ENCODE measurements at regions of chr10 and their contacts with region 1.

Region 1: DNA sequence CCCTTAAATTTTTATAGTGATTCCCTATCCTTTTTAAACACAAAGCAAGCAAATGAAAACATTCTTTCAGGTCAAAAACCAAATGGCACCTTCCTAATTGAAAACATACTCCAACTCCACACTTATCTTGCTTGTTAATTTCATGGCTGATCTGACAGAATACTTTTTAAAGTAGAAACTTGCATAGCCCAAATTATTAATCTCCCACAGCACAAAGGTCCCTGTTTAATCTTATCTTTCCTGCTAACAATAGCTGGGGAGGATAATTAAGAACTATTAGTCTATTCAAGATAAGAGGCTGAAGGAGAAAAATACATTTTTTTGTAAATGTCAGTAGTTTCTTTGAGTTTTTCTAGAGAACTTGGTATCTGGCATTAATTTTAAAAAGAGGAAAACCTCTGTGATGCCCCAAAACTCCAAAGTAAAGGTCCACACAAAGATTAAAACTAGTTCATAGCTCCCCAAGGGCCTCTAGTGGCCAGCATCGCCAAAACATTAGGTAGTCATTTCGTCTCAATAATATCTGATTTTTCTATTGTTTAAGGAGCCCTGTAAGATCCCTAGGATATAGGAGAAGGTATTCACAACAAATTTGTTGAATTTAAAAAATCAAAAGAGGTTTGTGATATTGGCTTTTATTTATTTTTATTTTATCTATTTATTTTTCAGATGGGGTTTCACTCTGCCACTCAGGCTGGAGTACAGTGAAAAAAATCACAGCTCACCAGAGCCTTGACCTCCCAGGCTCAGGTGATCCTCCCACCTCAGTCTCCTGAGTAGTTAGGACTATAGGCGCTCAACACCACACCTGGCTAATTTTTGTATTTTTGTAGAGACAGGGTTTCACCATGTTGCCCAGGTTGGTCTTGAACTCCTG is 14.7 kb downstream of the CDNF start:
- DNase-seq: no peak
- H3K4me3 ChIP-seq: no peak overlapping the region
- H3K27ac ChIP-seq: no peak overlapping the region
- H3K4me1 ChIP-seq: no peaks in the 10 kb centered on the region; a peak in 2 of 7 replicates
- H3K27me3 ChIP-seq: no peaks in the 10 kb centered on the region
- CTCF ChIP-seq: peak in 2 of 3 experiments; percentile 56 to 64; a peak in 3 of 4 replicates
- EP300 ChIP-seq: no peak
- POLR2A ChIP-seq: no peak
- RAD21 ChIP-seq: peak; percentile 86 to 88

Region 2: DNA sequence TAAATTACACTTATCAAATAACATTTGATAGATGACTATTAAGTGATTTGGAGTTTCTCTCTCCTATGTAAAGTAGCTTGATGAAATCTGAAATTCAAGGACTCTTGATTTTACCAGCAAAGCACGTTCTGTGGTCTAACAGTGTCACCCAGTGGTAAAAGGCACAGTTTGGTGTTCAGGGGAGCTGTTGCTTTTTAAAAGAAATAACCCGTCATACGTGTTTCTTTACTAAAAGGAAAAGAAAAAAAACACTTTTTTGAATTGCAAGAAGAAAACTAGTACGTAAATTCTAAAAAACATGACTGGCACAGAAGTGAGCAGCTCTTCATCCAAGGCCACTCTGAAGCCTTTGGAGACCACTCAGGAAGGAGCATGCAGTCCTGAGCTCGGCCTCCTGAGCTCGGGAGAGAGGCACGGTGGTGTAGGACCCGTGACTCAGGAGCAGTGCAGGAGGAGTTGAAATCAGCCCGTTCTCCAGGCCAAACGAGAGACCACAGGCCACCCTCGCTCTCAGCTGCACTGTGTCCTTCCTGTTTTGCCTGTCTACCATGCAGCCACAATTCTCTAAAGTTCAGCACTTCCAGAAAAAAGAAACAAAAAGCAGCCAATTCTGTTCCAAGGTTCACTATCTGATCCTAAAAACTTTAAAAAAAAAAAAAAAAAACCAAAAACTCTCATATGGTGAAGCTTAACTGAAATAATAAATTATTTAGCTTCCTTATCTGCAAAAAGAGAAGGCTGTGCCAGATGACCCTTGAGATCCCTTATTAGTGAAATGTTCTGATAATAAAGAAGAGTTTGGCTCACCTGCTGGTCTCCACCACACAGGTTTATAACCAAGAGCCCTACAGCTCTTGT is 279.8 kb before region 1 on chr10:
- CTCF ChIA-PET with region 1: interaction called, 40 read pairs
- POLR2A ChIA-PET with region 1: interaction called, 4 read pairs
- DNase-seq: no peak
- H3K4me3 ChIP-seq: no peak overlapping the region
- H3K27ac ChIP-seq: no peak overlapping the region
- H3K4me1 ChIP-seq: peaks cover 0 to 8% (median 4%) of the 10 kb centered on the region in 4 experiments; a peak in 3 of 7 replicates
- H3K27me3 ChIP-seq: no peaks in the 10 kb centered on the region
- CTCF ChIP-seq: peak in 1 of 3 experiments; percentile 6; a peak in 1 of 4 replicates
- EP300 ChIP-seq: no peak
- POLR2A ChIP-seq: no peak
- RAD21 ChIP-seq: peak; percentile 38 to 45

Region 3: DNA sequence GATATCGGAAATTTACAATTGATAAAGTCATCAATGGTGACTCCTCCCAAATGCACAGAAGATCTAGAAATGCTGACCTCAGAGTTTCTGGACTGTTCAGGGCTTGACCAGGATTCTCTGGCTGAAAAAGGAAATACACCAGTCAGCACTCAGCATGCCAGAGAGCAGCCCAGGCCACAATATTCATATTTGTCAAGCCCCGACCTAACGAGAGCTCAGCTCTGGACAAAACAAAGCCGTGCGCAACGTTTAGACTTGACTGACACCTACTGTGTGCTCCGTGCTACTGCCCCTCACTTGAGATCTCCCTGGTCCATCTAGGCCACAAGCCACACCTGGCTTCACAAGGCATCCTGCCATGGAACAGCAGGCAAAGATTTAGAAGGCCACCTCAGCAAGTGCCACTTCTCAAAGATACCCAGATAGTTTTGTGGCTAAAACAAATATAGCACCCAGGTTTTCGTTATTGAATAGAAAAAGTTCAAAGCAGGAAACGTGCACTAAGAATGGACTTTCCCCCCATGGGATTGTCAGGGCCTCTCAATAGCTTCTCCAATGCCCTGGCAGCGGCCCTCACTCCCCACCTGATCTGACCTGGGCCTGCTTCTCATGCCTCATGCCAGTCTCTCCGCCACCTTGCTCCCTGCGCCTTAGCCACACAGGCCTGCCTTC is 266.7 kb before region 1 on chr10:
- CTCF ChIA-PET with region 1: interaction called, 11 read pairs
- POLR2A ChIA-PET with region 1: interaction called, 3 read pairs
- DNase-seq: no peak
- H3K4me3 ChIP-seq: no peak overlapping the region
- H3K27ac ChIP-seq: no peak overlapping the region
- H3K4me1 ChIP-seq: peaks cover 0 to 18% (median 13%) of the 10 kb centered on the region in 4 experiments; a peak in 6 of 7 replicates
- H3K27me3 ChIP-seq: no peaks in the 10 kb centered on the region
- CTCF ChIP-seq: peak; percentile 48 to 77 (median 75)
- EP300 ChIP-seq: no peak
- POLR2A ChIP-seq: no peak
- RAD21 ChIP-seq: peak; percentile 66 to 70

Region 4: GRCh38 chr10:14688606-14689005 is 134.5 kb before region 1 on chr10:
- CTCF ChIA-PET with region 1: no interaction called
- POLR2A ChIA-PET with region 1: no interaction called
- DNase-seq: no peak
- H3K4me3 ChIP-seq: no peak overlapping the region
- H3K27ac ChIP-seq: no peak overlapping the region
- H3K4me1 ChIP-seq: no peaks in the 10 kb centered on the region
- H3K27me3 ChIP-seq: no peaks in the 10 kb centered on the region; a peak in 1 of 7 replicates
- CTCF ChIP-seq: no peak
- EP300 ChIP-seq: no peak
- POLR2A ChIP-seq: no peak
- RAD21 ChIP-seq: no peak

Region 5: DNA sequence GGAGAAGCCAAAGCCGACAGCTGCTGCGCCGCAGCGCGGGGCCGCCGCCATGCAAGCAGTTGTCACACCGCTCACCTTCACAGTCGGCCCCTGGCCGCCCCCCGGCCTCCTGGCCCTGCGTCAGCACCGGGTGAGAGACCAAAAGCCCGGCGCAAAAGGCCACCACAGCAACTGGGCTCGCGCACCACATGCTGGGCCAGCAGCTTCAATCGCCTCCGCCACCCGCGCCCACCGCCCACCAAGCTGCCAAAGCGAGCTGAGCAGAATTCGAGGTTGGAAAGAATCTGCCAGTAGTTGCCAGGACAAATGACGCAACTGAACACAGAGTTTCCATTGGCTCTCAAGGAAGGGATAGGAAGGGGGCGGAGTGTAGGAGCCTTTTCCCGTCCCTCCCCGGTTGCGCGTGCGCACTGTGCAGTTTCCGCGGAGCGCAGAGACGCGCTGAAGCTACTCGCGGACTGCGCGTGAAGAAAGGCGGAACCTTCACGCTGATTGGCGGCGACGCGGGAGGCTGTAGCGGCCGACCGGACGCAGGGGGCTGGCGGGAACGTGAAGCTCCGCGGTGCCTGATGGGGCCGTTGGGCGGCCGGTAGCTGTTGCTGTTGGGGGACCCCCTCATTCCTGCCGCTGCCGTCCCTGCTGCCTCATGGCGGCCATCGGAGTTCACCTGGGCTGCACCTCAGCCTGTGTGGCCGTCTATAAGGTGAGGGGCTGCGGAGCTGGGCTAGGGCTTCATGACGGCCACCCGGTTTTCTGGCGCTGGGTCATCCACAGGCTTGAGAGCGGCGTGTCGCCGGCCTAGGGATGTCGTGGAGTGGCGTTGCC is 14.9 kb after region 1 on chr10 and contains the starts of genes CDNF, HSPA14 and MSANTD7:
- CTCF ChIA-PET with region 1: interaction called, 14 read pairs
- POLR2A ChIA-PET with region 1: interaction called, 8 read pairs
- DNase-seq: peak; percentile 97 to 98
- H3K4me3 ChIP-seq: peak within 1 kb of the TSS; percentile 87 to 93 (median 91)
- H3K27ac ChIP-seq: peak within 1 kb of the TSS; percentile 91
- H3K4me1 ChIP-seq: peaks cover 0 to 8% (median 3%) of the 10 kb centered on the region in 4 experiments; a peak in 3 of 7 replicates
- H3K27me3 ChIP-seq: no peaks in the 10 kb centered on the region
- CTCF ChIP-seq: no peak
- EP300 ChIP-seq: peak in 1 of 2 experiments; percentile 10; a peak in 1 of 3 replicates
- POLR2A ChIP-seq: peak; percentile 84 to 93
- RAD21 ChIP-seq: no peak
- total RNA-seq, gene CDNF: 0.32 and 0.36 TPM in 2 replicates
- total RNA-seq, gene HSPA14: 32.9 and 36.4 TPM in 2 replicates
- total RNA-seq, gene MSANTD7: 15.2 and 16.0 TPM in 2 replicates